BJ (cell line): ENCODE measurements at regions of chr1 and their contacts with region 1.

Region 1: DNA sequence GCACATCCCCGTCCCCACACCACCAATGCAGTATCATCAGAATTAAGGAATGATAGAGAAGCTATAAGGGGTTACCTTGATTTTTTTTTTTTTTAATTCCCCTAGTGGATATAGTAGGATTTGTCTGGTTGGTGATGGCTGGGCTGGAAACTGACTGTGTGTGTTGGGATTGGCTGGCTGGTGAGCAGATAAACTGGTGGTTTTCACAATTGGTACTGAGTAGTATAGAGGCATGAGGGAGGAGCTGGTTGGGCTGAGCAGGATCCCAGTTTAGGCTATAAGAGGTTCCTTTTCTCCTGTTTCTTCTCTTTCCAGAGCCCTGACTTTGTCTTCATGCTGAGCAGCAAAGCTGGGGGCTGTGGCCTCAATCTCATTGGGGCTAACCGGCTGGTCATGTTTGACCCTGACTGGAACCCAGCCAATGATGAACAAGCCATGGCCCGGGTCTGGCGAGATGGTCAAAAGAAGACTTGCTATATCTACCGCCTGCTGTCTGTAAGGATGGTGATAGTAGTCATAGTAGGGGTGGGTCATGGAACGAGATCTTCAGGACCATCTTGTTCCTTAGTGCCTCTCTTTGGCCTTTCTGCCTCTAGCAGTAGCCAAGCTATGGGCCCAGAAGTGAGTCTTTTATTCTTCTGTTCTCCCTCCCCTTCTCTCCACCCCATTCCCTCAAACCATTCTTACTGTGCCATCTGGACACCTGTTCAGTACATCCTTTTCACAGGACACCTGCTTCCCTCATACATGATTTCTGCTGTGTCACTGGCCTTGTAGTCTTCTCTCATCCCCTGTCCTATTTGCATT is 26.9 kb downstream of the RAD54L start:
- DNase-seq: no peak
- H3K4me3 ChIP-seq: no peak overlapping the region
- H3K27me3 ChIP-seq: no peaks in the 10 kb centered on the region
- CTCF ChIP-seq: no peak

Region 2: GRCh38 chr1:46285730-46286477 is 11.5 kb after region 1 on chr1:
- CTCF ChIA-PET with region 1: interaction called, 14 read pairs
- POLR2A ChIA-PET with region 1: no interaction called
- DNase-seq: no peak
- H3K4me3 ChIP-seq: no peak overlapping the region
- H3K27me3 ChIP-seq: no peaks in the 10 kb centered on the region
- CTCF ChIP-seq: no peak